Mammary epithelial cell (primary cell): ENCODE measurements at regions of chr2 and their contacts with region 1.

Region 1: DNA sequence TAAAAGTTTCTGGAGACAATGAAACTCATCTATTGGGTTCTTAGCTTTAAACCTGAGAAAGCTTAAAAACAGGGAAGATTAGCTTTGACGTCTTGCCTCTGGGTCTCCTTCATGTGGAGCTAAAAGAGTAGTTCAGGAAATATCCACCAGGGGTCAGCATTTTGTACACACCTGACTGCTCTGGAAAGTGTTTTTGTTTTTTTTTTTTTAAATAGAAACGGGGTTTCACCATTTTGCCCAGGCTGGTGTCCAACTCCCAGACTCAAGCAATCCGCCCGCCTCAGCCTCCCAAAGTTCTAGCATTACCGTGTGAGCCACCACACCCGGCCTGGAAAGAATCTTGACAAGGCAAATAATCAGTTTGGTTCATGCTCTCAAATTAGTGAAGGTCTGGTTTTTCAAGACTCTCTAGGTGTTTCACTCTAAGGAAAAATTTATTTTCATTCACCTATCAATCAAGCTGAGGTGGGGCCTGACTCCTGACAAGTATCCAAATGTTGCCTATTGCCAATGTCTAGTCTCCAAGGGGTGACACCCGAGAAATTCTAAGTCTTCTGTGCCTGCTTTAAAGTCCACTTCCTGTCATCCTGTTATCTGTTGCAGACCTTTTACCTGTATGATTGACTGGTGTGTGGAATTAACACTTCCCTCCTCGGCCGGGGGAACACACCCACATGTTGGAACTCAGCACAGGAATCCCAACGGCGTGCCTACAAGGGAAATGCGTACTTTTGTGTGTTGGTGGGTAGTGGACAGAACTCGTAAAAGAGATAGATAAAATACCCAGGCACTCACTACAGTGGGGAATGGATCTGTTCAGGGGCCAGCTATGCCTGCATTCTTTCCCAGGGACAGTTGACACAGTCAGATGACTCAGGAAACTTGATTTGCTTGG is 11.3 kb downstream of the IL1RN start:
- DNase-seq: peak; percentile 66
- H3K4me3 ChIP-seq: no peak overlapping the region
- H3K27ac ChIP-seq: no peak overlapping the region
- H3K4me1 ChIP-seq: peaks cover 9% of the 10 kb centered on the region
- H3K27me3 ChIP-seq: no peaks in the 10 kb centered on the region
- CTCF ChIP-seq: peak; percentile 61 to 70

Region 2: DNA sequence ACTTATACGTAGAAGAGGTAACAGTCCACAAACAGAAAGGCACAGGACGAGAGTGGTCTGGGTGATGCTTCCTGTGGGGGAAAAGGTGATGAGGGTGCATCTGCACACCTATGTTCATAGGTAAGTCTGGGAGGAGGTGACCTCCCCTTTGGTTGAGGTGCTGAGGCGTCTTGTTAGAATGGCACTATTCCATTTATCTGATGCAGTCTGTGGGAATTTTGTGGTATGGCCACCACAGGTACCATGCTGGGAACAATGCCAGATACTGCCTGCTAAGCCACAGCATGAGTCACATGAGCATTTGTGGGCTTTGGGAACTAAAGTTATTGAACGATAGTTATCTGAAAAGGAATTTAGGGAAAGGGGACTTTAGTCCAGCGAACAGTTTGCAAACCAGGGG is 199.8 kb before region 1 on chr2:
- CTCF ChIA-PET with region 1: no interaction called
- dilution Hi-C with region 1: no loop called
- in situ Hi-C with region 1: no loop called
- intact Hi-C with region 1: no loop called
- DNase-seq: peak; percentile 90
- H3K4me3 ChIP-seq: no peak overlapping the region
- H3K27ac ChIP-seq: no peak overlapping the region
- H3K4me1 ChIP-seq: peaks cover 23% of the 10 kb centered on the region
- H3K27me3 ChIP-seq: no peaks in the 10 kb centered on the region
- CTCF ChIP-seq: no peak

Region 3: GRCh38 chr2:113080134-113080533 is 58.5 kb before region 1 on chr2:
- CTCF ChIA-PET with region 1: interaction called, 7 read pairs
- dilution Hi-C with region 1: no loop called
- in situ Hi-C with region 1: loop called in 1 of 2 experiments (anchors 10 kb)
- intact Hi-C with region 1: loop called (anchors 1 kb)
- DNase-seq: peak; percentile 47
- H3K4me3 ChIP-seq: no peak overlapping the region
- H3K27ac ChIP-seq: no peak overlapping the region
- H3K4me1 ChIP-seq: peaks cover 48% of the 10 kb centered on the region
- H3K27me3 ChIP-seq: no peaks in the 10 kb centered on the region
- CTCF ChIP-seq: peak; percentile 92 to 94

Region 4: DNA sequence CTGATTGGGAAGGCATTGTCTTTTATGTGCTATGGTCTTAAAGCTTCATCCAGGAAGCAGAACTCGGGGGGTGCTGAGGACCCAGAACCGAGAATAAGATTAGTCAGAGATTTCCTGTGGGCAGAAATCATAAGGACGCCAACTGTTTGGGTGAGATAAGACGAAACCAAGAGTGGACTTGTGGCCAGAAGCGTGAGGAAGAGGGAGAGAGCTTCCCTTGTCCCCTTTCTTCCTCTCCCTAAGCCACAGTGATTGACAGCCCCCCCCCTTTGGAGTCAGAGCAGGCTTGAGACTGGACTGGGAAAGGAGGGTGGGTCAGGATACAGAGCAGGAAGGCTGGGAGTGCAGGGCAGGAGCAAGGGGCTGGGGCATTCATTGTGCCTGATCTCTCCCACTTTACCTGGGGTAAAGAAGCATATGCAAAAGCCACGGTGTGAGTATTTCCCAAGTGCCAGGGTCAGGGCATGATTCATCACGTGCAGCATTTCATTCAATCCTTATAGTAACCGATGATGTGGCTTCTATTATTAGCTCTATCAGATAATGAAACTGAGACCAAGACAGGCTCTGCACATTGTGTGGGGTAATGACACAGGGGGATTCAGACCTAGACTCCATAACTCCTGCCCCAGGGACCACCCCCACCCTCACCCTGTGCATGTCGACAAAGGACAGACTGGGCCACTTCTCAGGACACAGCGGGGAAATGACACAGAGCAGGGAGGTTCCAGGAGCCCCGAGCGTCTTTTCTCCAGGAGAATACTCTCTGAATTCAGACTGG is 14.3 kb before region 1 on chr2:
- CTCF ChIA-PET with region 1: interaction called, 12 read pairs
- dilution Hi-C with region 1: no loop called
- in situ Hi-C with region 1: no loop called
- intact Hi-C with region 1: no loop called
- DNase-seq: peak; percentile 64
- H3K4me3 ChIP-seq: no peak overlapping the region
- H3K27ac ChIP-seq: no peak overlapping the region
- H3K4me1 ChIP-seq: peaks cover 14% of the 10 kb centered on the region
- H3K27me3 ChIP-seq: no peaks in the 10 kb centered on the region
- CTCF ChIP-seq: no peak

Region 5: DNA sequence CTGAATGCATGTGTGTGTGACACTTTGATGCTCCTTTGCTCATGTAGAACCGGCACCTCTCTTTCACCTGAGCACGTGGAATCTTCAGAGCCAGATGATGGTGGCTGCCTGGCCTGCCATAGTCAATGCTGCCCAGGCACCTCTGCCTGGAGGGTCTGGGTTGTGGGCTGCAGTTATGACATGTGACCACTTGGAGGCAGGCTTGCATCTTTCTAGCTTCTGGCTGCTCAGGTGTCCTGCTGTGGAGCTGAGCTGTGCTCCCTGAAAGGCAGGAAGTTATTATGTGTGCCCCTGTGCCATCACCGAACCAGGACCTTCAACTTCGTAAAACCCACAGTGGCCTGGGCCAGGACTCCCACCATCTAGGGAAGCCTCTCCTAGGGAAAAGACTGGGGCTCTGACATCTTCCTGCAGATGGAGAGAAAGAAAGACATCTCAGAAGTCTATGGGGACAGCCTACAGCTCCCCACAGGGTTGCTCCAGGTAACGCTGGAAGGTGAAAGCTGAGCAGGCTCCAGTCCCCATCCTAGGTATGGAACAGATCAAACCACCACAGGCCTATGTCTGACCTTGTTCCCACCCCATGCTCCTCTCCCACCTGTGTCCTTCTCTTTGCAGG is 65.3 kb after region 1 on chr2:
- CTCF ChIA-PET with region 1: interaction called, 17 read pairs
- dilution Hi-C with region 1: loop called (anchors 5 kb)
- in situ Hi-C with region 1: loop called (anchors 5 to 10 kb)
- intact Hi-C with region 1: loop called (anchors 1 kb)
- DNase-seq: peak; percentile 64
- H3K4me3 ChIP-seq: no peak overlapping the region
- H3K27ac ChIP-seq: no peak overlapping the region
- H3K4me1 ChIP-seq: peaks cover 36% of the 10 kb centered on the region
- H3K27me3 ChIP-seq: no peaks in the 10 kb centered on the region
- CTCF ChIP-seq: peak; percentile 91 to 94

Region 6: GRCh38 chr2:113248997-113249770 is 110.5 kb after region 1 on chr2:
- CTCF ChIA-PET with region 1: no interaction called
- dilution Hi-C with region 1: no loop called
- in situ Hi-C with region 1: no loop called
- intact Hi-C with region 1: loop called (anchors 2 kb)
- DNase-seq: peak; percentile 69
- H3K4me3 ChIP-seq: no peak overlapping the region
- H3K27ac ChIP-seq: no peak overlapping the region
- H3K4me1 ChIP-seq: peaks cover 29% of the 10 kb centered on the region
- H3K27me3 ChIP-seq: no peaks in the 10 kb centered on the region
- CTCF ChIP-seq: peak; percentile 91 to 97

Region 7: GRCh38 chr2:113390124-113390849 is 251.6 kb after region 1 on chr2:
- CTCF ChIA-PET with region 1: interaction called, 6 read pairs
- dilution Hi-C with region 1: loop called (anchors 25 kb)
- in situ Hi-C with region 1: no loop called
- intact Hi-C with region 1: loop called (anchors 2 kb)
- DNase-seq: peak; percentile 51
- H3K4me3 ChIP-seq: no peak overlapping the region
- H3K27ac ChIP-seq: no peak overlapping the region
- H3K4me1 ChIP-seq: no peaks in the 10 kb centered on the region
- H3K27me3 ChIP-seq: no peaks in the 10 kb centered on the region
- CTCF ChIP-seq: peak; percentile 93 to 96